Astrocyte of the spinal cord (primary cell): ENCODE measurements at regions of chr11 and their contacts with region 1.

Region 1: DNA sequence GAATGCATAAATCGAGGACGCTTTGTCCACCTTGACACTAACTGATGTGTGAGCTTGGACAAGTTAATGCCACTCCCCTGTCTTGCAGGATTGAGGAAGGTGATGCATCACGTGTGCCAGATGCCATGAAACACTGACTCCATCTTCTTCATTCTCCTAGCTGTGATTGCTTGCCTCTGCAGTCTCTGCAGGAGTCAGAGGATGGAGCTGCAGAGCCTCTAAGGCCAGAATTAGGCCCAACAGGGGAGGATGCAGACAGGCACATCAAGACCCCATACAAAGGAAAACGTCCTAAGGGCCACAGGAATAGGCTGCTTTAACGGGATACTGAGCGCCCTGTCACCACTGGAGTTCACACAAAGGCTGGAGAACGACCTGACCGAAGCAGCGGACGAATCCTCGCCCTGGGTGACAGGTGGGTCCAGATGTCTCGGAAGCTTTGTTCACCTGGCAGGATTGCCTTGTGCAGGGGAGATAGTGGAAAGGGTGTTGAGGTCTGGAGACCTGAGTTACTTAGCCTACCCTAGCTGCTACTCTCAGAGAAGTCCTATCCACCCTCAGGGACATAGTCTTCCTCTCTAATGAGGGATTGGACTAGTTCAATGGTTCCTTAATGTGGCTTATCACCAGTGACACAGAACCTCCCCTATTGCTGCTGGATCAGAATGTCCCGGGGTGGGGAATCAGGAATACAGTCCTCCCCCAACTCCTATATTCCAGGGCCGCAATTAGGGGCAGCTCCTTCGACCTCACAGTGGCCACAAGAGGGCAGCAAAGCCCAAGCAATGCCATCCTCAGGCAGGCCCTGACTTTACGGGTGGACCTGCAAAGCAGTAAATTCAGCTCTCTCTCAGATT is 32.4 kb downstream of the DBX1 start:
- DNase-seq: peak; percentile 71
- H3K4me3 ChIP-seq: no peak overlapping the region
- CTCF ChIP-seq: peak; percentile 86

Region 2: GRCh38 chr11:20355221-20356219 is 227.6 kb after region 1 on chr11:
- in situ Hi-C with region 1: loop called (anchors 25 kb)
- DNase-seq: peak; percentile 58
- H3K4me3 ChIP-seq: no peak overlapping the region
- CTCF ChIP-seq: peak; percentile 77